ENCODE measurements at regions of chr1 and their contacts with region 1.

Region 1: DNA sequence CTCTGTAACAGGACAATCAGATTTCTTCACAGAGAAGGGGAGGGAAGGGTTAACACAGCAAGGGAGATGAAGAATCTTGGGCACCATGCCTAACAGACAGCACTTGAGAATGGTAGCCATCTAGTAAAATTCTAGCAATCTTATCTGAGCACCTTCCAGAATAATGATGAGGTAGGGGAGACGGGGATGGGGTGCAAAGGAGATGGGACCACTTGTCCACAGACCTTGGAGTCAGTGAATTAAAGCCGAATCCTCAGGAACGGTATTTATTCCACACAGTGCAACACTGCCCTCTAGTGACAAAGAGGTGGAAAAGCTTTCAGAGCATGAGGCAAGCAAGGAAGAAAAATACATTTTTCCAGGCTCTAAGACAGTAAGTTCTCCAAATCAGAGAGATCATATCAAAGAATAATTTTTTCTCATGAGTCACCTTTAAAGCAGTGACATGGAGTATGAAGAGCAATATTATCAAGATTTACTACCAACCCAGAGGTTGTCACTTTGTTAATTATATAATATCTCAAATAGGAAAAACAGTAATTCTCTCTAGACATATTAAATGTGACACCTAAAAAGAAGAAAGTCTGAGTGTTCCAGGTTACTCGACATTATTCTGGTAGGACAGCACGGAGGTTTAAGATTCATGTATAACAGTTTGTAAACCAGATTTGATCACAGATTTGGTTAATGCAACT is 43.3 kb upstream of the LPAR3 start:
- DNase-seq: peak in 7 of 9 donors; percentile 38 to 66 (median 57)
- ATAC-seq: peak; percentile 91
- H3K4me3 ChIP-seq: no peak overlapping the region
- H3K4me3 Mint-ChIP-seq: peak overlapping the region in 2 of 10 donors; percentile 5 to 51
- H3K27ac ChIP-seq: no peak overlapping the region
- H3K27ac Mint-ChIP-seq: peak overlapping the region in 1 of 9 donors; percentile 27
- H3K4me1 ChIP-seq: no peaks in the 10 kb centered on the region
- H3K4me1 Mint-ChIP-seq: peaks cover 0 to 5% (median 0%) of the 10 kb centered on the region in 7 donors
- H3K27me3 ChIP-seq: no peaks in the 10 kb centered on the region
- H3K27me3 Mint-ChIP-seq: no peaks in the 10 kb centered on the region

Region 2: DNA sequence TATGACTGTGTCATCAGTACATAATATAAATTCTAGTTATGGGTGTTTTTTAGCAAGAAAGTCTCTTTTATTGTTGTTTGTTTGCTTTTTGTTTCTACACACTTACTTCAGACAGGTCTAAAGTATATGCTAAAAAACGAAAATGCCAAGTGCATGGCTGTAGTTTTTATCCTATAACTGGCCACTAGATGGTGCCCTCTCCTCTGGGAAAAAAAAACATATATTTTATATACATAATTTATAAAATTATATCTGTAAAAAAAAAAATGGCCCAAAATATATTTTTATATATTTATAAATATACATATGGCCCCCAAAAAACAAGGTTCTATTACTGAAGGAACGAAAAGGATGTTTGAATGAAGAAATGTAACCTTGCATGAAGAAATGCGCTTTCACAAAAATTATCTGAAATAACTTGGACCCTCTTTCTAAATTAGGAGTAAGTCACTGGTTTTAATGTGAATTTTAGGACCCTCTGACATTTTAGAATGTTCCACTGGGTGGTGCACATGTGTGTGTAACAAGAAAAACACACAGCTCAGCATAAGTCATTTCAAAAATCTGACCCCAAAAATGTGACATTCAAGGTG is 1030.9 kb before region 1 on chr1:
- CTCF ChIA-PET with region 1: no interaction called
- POLR2A ChIA-PET with region 1: no interaction called
- intact Hi-C with region 1: loop called in 1 of 2 experiments (anchors 1 kb)
- DNase-seq: peak in 5 of 9 donors; percentile 16 to 34 (median 25)
- ATAC-seq: peak; percentile 53
- H3K4me3 ChIP-seq: no peak overlapping the region
- H3K4me3 Mint-ChIP-seq: no peak overlapping the region
- H3K27ac ChIP-seq: no peak overlapping the region
- H3K27ac Mint-ChIP-seq: no peak overlapping the region
- H3K4me1 ChIP-seq: no peaks in the 10 kb centered on the region
- H3K4me1 Mint-ChIP-seq: no peaks in the 10 kb centered on the region
- H3K27me3 ChIP-seq: no peaks in the 10 kb centered on the region
- H3K27me3 Mint-ChIP-seq: peaks cover 9 to 23% (median 20%) of the 10 kb centered on the region in 5 donors

Region 3: GRCh38 chr1:84286071-84286470 is 650.2 kb before region 1 on chr1:
- CTCF ChIA-PET with region 1: no interaction called
- POLR2A ChIA-PET with region 1: no interaction called
- intact Hi-C with region 1: no loop called
- DNase-seq: no peak
- ATAC-seq: no peak
- H3K4me3 ChIP-seq: no peak overlapping the region
- H3K4me3 Mint-ChIP-seq: no peak overlapping the region
- H3K27ac ChIP-seq: no peak overlapping the region
- H3K27ac Mint-ChIP-seq: no peak overlapping the region
- H3K4me1 ChIP-seq: no peaks in the 10 kb centered on the region
- H3K4me1 Mint-ChIP-seq: no peaks in the 10 kb centered on the region
- H3K27me3 ChIP-seq: no peaks in the 10 kb centered on the region
- H3K27me3 Mint-ChIP-seq: peaks cover 2 to 35% (median 25%) of the 10 kb centered on the region in 5 donors

Region 4: DNA sequence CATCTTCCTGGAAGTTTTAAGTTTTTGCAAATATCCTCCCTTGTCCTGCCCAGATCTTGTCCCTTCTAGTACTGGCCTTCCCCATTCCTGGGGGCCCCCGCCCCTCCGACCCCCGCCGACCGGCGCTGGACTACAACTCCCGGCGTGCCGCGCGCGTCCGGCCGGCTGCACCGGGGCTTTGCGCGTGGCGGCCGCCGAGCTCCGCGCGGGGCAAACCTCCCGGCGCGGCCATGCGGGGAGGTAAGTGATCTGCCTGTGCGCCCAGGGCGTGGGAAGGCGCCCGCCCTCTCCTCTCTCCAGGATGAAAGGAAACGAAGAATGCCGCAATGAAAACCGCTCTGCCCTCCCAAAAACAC is 638.0 kb before region 1 on chr1:
- CTCF ChIA-PET with region 1: no interaction called
- POLR2A ChIA-PET with region 1: no interaction called
- intact Hi-C with region 1: loop called in 1 of 2 experiments (anchors 10 kb)
- DNase-seq: peak; percentile 40 to 65 (median 46)
- ATAC-seq: peak; percentile 88
- H3K4me3 ChIP-seq: peak overlapping the region; percentile 92
- H3K4me3 Mint-ChIP-seq: peak overlapping the region; percentile 83 to 95 (median 90)
- H3K27ac ChIP-seq: peak overlapping the region; percentile 69
- H3K27ac Mint-ChIP-seq: peak overlapping the region; percentile 67 to 85 (median 79)
- H3K4me1 ChIP-seq: peaks cover 4 to 25% of the 10 kb centered on the region in 2 donors
- H3K4me1 Mint-ChIP-seq: peaks cover 17 to 52% (median 42%) of the 10 kb centered on the region in 7 donors
- H3K27me3 ChIP-seq: no peaks in the 10 kb centered on the region
- H3K27me3 Mint-ChIP-seq: peaks cover 0 to 16% (median 6%) of the 10 kb centered on the region in 5 donors

Region 5: DNA sequence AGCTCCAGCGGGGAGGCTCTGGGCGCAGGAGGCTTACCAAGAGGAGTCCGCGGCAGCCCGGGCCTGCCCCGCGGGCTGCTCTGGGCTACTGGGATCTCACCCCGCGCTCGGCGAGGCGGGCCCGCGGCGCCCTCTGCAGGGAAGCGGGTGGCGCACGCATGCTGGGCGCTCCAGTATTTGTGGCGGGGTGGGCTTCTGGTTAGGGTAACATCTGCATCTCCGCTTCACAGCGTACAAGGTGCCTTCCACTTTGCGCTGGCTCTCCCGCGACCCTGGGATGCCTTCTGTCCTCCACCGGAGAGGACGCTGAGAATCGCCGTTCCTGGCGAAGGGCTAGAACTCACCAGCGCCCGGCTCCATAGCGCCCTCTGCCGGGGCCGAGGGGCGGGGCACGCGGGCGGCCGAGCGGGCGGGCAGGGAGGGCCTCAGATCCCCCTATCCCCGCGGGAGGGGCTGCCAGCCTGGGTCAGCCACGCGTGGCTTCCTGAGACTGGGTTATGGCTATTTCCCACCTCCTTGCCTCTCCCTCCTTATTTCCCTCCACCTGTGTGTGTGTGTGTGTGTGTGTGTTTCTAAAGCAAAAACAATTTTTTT is 315.4 kb before region 1 on chr1:
- CTCF ChIA-PET with region 1: no interaction called
- POLR2A ChIA-PET with region 1: no interaction called
- intact Hi-C with region 1: loop called (anchors 1 to 5 kb)
- DNase-seq: peak; percentile 60 to 95 (median 84)
- ATAC-seq: peak; percentile 96
- H3K4me3 ChIP-seq: peak overlapping the region; percentile 85
- H3K4me3 Mint-ChIP-seq: peak overlapping the region; percentile 85 to 97 (median 92)
- H3K27ac ChIP-seq: peak overlapping the region; percentile 68
- H3K27ac Mint-ChIP-seq: peak overlapping the region in 6 of 9 donors; percentile 53 to 89 (median 82)
- H3K4me1 ChIP-seq: peaks cover 0 to 3% of the 10 kb centered on the region in 2 donors
- H3K4me1 Mint-ChIP-seq: peaks cover 0 to 18% (median 5%) of the 10 kb centered on the region in 7 donors
- H3K27me3 ChIP-seq: no peaks in the 10 kb centered on the region
- H3K27me3 Mint-ChIP-seq: peaks cover 0 to 7% (median 0%) of the 10 kb centered on the region in 5 donors

Region 6: GRCh38 chr1:84753516-84754385 is 182.5 kb before region 1 on chr1:
- CTCF ChIA-PET with region 1: interaction called, 3 read pairs
- POLR2A ChIA-PET with region 1: no interaction called
- intact Hi-C with region 1: loop called (anchors 1 kb)
- DNase-seq: peak; percentile 47 to 77 (median 67)
- ATAC-seq: peak; percentile 93
- H3K4me3 ChIP-seq: no peak overlapping the region
- H3K4me3 Mint-ChIP-seq: no peak overlapping the region
- H3K27ac ChIP-seq: no peak overlapping the region
- H3K27ac Mint-ChIP-seq: peak overlapping the region in 1 of 9 donors; percentile 29
- H3K4me1 ChIP-seq: no peaks in the 10 kb centered on the region
- H3K4me1 Mint-ChIP-seq: peaks cover 0 to 7% (median 3%) of the 10 kb centered on the region in 7 donors
- H3K27me3 ChIP-seq: no peaks in the 10 kb centered on the region
- H3K27me3 Mint-ChIP-seq: peaks cover 9 to 26% (median 18%) of the 10 kb centered on the region in 5 donors

Region 7: GRCh38 chr1:84781946-84782771 is 154.1 kb before region 1 on chr1:
- CTCF ChIA-PET with region 1: interaction called, 6 read pairs
- POLR2A ChIA-PET with region 1: no interaction called
- intact Hi-C with region 1: loop called (anchors 1 kb)
- DNase-seq: peak; percentile 63 to 82 (median 75)
- ATAC-seq: peak; percentile 93
- H3K4me3 ChIP-seq: peak overlapping the region; percentile 23
- H3K4me3 Mint-ChIP-seq: peak overlapping the region; percentile 60 to 89 (median 84)
- H3K27ac ChIP-seq: peak overlapping the region; percentile 26
- H3K27ac Mint-ChIP-seq: peak overlapping the region in 8 of 9 donors; percentile 48 to 88 (median 78)
- H3K4me1 ChIP-seq: peaks cover 0 to 14% of the 10 kb centered on the region in 2 donors
- H3K4me1 Mint-ChIP-seq: peaks cover 17 to 35% (median 30%) of the 10 kb centered on the region in 7 donors
- H3K27me3 ChIP-seq: no peaks in the 10 kb centered on the region
- H3K27me3 Mint-ChIP-seq: peaks cover 0 to 7% (median 0%) of the 10 kb centered on the region in 5 donors

Region 8: GRCh38 chr1:84923317-84923716 is 12.9 kb before region 1 on chr1:
- CTCF ChIA-PET with region 1: interaction called, 13 read pairs
- POLR2A ChIA-PET with region 1: no interaction called
- intact Hi-C with region 1: no loop called
- DNase-seq: no peak
- ATAC-seq: no peak
- H3K4me3 ChIP-seq: no peak overlapping the region
- H3K4me3 Mint-ChIP-seq: no peak overlapping the region
- H3K27ac ChIP-seq: no peak overlapping the region
- H3K27ac Mint-ChIP-seq: no peak overlapping the region
- H3K4me1 ChIP-seq: no peaks in the 10 kb centered on the region
- H3K4me1 Mint-ChIP-seq: no peaks in the 10 kb centered on the region
- H3K27me3 ChIP-seq: no peaks in the 10 kb centered on the region
- H3K27me3 Mint-ChIP-seq: peaks cover 0 to 10% (median 2%) of the 10 kb centered on the region in 5 donors

Region 9: DNA sequence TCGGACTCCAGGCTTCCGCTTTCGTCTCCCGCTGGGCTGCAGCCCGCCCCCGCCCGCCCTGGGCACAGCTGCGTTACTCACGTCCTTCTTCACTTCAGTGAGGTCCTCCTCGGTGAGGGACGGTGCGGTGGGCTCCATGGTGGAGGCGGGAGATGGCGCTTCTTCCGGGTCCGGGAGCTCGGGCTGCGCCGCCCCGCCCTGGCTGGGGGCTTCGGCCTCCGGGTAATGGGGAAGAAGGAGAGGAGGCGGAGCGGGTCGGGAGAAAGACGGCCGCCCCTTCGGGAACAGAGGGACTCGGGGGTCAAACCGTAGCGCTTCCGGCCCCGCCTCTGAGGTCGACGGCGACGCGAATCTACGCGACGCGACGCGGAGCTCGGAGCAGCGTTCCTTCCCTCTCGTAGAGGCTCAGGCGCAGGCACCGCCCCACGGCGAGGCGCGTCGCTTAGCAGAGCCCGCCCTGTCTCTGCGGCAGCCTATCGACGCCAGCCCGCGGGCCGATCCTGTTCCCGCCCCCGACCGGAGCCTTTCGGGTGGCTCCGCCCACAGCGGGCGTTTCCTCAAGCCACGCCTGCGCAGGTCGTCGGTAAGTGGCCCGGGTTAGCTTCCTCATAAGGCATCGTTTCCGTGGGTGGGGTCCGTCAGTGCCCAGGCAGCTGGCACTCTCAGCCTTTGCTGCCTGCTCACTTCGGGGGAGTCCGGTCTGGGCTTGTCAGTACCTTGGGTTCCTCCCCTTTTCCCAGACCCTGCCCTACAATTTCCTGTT is 340.1 kb after region 1 on chr1 and contains the start of gene BCL10:
- CTCF ChIA-PET with region 1: no interaction called
- POLR2A ChIA-PET with region 1: no interaction called
- intact Hi-C with region 1: no loop called
- DNase-seq: peak; percentile 95 to 98 (median 97)
- ATAC-seq: peak; percentile 97
- H3K4me3 ChIP-seq: peak within 1 kb of the TSS; percentile 89
- H3K4me3 Mint-ChIP-seq: peak within 1 kb of the TSS; percentile 82 to 95 (median 90)
- H3K27ac ChIP-seq: peak within 1 kb of the TSS; percentile 97
- H3K27ac Mint-ChIP-seq: peak within 1 kb of the TSS; percentile 84 to 97 (median 95)
- H3K4me1 ChIP-seq: peaks cover 17 to 28% of the 10 kb centered on the region in 2 donors
- H3K4me1 Mint-ChIP-seq: peaks cover 36 to 55% (median 47%) of the 10 kb centered on the region in 7 donors
- H3K27me3 ChIP-seq: no peaks in the 10 kb centered on the region
- H3K27me3 Mint-ChIP-seq: peaks cover 0 to 21% (median 0%) of the 10 kb centered on the region in 5 donors
- total RNA-seq, gene BCL10: 30.4 to 53.0 (median 35.4) TPM